ENCODE measurements at regions of chr17 and their contacts with region 1.

Region 1: DNA sequence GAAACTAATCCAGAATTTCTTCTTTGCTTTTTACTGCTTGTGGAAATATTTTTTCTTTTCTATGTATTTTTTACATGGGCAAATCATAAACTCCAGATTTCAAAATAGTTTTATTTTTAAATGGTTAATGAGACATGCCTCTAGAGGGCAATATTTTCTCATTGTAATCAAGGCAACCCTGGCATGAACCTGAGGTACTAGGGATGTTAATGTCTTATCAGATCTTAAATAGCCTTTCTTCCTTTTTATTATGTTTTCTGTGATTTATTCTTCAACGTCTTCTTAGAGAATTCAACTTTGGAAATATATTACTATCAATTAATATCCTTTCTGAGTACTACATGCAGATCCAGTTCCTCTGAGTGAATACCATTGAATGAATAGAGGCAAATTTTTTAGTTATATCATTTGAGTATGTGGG is 324.7 kb downstream of the BCAS3 start:
- DNase-seq: peak in 5 of 9 donors; percentile 24 to 42 (median 31)
- ATAC-seq: no peak
- H3K4me3 ChIP-seq: no peak overlapping the region
- H3K4me3 Mint-ChIP-seq: no peak overlapping the region
- H3K27ac ChIP-seq: no peak overlapping the region
- H3K27ac Mint-ChIP-seq: no peak overlapping the region
- H3K4me1 ChIP-seq: no peaks in the 10 kb centered on the region
- H3K4me1 Mint-ChIP-seq: peaks cover 0 to 3% (median 0%) of the 10 kb centered on the region in 7 donors
- H3K27me3 ChIP-seq: no peaks in the 10 kb centered on the region
- H3K27me3 Mint-ChIP-seq: peaks cover 0 to 20% (median 0%) of the 10 kb centered on the region in 5 donors

Region 2: DNA sequence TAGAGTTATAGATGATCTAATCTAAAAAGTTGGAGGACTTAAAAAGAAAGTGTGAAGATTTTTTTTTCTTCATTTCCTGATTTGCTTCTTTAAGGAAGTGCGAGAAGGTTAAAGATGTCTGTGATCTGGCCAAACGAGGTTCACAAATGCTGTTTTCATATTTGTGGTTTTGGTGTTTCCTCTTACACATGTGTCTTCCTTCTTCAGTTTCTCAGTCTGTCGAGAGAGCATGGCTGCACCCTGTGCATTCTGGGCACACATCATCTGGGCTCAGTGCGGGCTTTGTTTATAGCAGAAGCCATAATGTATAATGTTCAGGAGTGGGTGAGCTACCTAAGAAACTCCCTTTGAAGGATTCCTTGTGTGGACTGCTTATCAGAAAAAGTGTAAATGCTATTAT is 136.9 kb after region 1 on chr17:
- CTCF ChIA-PET with region 1: no interaction called
- POLR2A ChIA-PET with region 1: no interaction called
- intact Hi-C with region 1: loop called in 1 of 2 experiments (anchors 10 kb)
- DNase-seq: peak; percentile 27 to 89 (median 80)
- ATAC-seq: peak; percentile 98
- H3K4me3 ChIP-seq: no peak overlapping the region
- H3K4me3 Mint-ChIP-seq: peak overlapping the region; percentile 24 to 81 (median 66)
- H3K27ac ChIP-seq: peak overlapping the region; percentile 7
- H3K27ac Mint-ChIP-seq: peak overlapping the region; percentile 28 to 86 (median 61)
- H3K4me1 ChIP-seq: peaks cover 14 to 29% of the 10 kb centered on the region in 2 donors
- H3K4me1 Mint-ChIP-seq: peaks cover 12 to 55% (median 44%) of the 10 kb centered on the region in 7 donors
- H3K27me3 ChIP-seq: no peaks in the 10 kb centered on the region
- H3K27me3 Mint-ChIP-seq: no peaks in the 10 kb centered on the region

Region 3: GRCh38 chr17:61361084-61361483 is 358.8 kb after region 1 on chr17:
- CTCF ChIA-PET with region 1: interaction called, 10 read pairs
- POLR2A ChIA-PET with region 1: no interaction called
- intact Hi-C with region 1: loop called (anchors 1 kb)
- DNase-seq: no peak
- ATAC-seq: no peak
- H3K4me3 ChIP-seq: no peak overlapping the region
- H3K4me3 Mint-ChIP-seq: no peak overlapping the region
- H3K27ac ChIP-seq: no peak overlapping the region
- H3K27ac Mint-ChIP-seq: no peak overlapping the region
- H3K4me1 ChIP-seq: no peaks in the 10 kb centered on the region
- H3K4me1 Mint-ChIP-seq: no peaks in the 10 kb centered on the region
- H3K27me3 ChIP-seq: no peaks in the 10 kb centered on the region
- H3K27me3 Mint-ChIP-seq: no peaks in the 10 kb centered on the region

Region 4: GRCh38 chr17:61389670-61390478 is 387.5 kb after region 1 on chr17:
- CTCF ChIA-PET with region 1: interaction called, 3 read pairs
- POLR2A ChIA-PET with region 1: no interaction called
- intact Hi-C with region 1: loop called (anchors 1 kb)
- DNase-seq: peak in 5 of 9 donors; percentile 34 to 64 (median 53)
- ATAC-seq: peak; percentile 40
- H3K4me3 ChIP-seq: no peak overlapping the region
- H3K4me3 Mint-ChIP-seq: no peak overlapping the region
- H3K27ac ChIP-seq: no peak overlapping the region
- H3K27ac Mint-ChIP-seq: no peak overlapping the region
- H3K4me1 ChIP-seq: no peaks in the 10 kb centered on the region
- H3K4me1 Mint-ChIP-seq: peaks cover 0 to 8% (median 4%) of the 10 kb centered on the region in 7 donors
- H3K27me3 ChIP-seq: no peaks in the 10 kb centered on the region
- H3K27me3 Mint-ChIP-seq: peaks cover 1 to 26% (median 16%) of the 10 kb centered on the region in 5 donors

Region 5: DNA sequence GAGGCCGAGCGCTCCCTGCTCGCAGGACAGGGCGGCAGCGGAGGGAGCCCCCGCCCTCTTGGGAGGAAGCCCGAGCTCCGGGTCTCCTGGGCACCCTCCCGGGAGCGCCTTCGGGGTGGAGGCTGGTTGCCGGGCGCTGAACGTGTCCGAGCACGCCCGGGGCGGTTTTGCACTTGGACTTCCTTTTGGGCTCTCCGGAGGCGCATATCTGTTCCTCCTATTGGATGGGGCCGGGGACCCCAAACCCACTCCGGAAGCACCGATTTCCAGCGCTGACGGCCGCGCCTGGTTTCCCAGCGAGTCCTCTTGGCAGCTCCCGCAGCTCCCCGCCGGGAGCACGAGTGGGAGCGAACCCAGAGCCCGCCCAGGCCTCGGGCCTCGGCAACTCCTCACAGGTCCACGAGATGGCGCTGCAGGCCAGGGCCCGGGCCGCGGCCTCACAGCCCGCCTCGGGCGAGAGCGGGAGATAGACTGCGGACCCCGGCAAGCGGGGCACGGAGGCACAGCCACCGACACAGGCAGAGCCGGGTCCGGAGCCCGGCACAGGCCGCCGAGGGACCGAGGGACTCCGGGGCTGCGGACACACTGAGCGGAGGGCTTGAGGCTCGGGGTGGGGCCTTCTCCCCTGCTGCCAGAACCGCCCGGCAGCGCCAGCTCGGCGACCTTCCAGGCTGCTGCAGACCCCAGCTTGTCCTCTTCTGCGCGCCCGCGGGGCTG is 410.0 kb after region 1 on chr17:
- CTCF ChIA-PET with region 1: no interaction called
- POLR2A ChIA-PET with region 1: no interaction called
- intact Hi-C with region 1: loop called in 1 of 2 experiments (anchors 1 kb)
- DNase-seq: peak; percentile 59 to 91 (median 81)
- ATAC-seq: peak; percentile 88
- H3K4me3 ChIP-seq: peak overlapping the region; percentile 64
- H3K4me3 Mint-ChIP-seq: peak overlapping the region in 9 of 10 donors; percentile 56 to 85 (median 76)
- H3K27ac ChIP-seq: peak overlapping the region; percentile 37
- H3K27ac Mint-ChIP-seq: no peak overlapping the region
- H3K4me1 ChIP-seq: peaks cover 7 to 15% of the 10 kb centered on the region in 2 donors
- H3K4me1 Mint-ChIP-seq: peaks cover 12 to 31% (median 23%) of the 10 kb centered on the region in 7 donors
- H3K27me3 ChIP-seq: peaks cover 0 to 23% of the 10 kb centered on the region in 2 donors
- H3K27me3 Mint-ChIP-seq: peaks cover 22 to 59% (median 28%) of the 10 kb centered on the region in 5 donors

Region 6: DNA sequence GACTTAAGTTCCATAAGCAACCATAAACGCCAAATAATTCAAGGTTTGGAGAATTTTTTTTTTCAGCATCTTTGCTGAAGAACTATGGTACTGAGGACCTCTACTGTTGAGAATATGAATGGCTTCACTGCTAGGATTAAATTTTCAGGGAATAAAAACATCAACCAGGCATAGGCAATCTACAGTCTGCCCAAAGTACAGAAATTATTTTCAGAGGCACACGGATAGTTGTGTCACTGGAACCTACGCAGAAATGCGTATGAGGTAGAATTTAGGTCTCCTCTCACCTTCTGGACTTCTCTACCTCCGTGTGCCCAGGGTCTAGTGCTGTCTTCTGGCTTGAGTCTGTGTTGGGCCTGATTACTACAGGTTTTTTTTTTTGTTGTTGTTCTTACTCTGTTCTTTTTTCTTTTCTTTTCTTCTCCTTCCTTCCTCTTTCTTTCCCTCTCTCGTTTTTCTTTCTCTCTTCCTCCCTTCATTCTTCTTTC is 549.0 kb after region 1 on chr17:
- CTCF ChIA-PET with region 1: no interaction called
- POLR2A ChIA-PET with region 1: no interaction called
- intact Hi-C with region 1: loop called in 1 of 2 experiments (anchors 2 kb)
- DNase-seq: peak in 1 of 9 donors; percentile 16
- ATAC-seq: no peak
- H3K4me3 ChIP-seq: no peak overlapping the region
- H3K4me3 Mint-ChIP-seq: no peak overlapping the region
- H3K27ac ChIP-seq: no peak overlapping the region
- H3K27ac Mint-ChIP-seq: no peak overlapping the region
- H3K4me1 ChIP-seq: no peaks in the 10 kb centered on the region
- H3K4me1 Mint-ChIP-seq: no peaks in the 10 kb centered on the region
- H3K27me3 ChIP-seq: no peaks in the 10 kb centered on the region
- H3K27me3 Mint-ChIP-seq: peaks cover 37 to 58% (median 53%) of the 10 kb centered on the region in 5 donors

Region 7: GRCh38 chr17:61837175-61838051 is 835.1 kb after region 1 on chr17:
- CTCF ChIA-PET with region 1: no interaction called
- POLR2A ChIA-PET with region 1: no interaction called
- intact Hi-C with region 1: loop called in 1 of 2 experiments (anchors 2 kb)
- DNase-seq: peak in 6 of 9 donors; percentile 16 to 31 (median 27)
- ATAC-seq: peak; percentile 70
- H3K4me3 ChIP-seq: no peak overlapping the region
- H3K4me3 Mint-ChIP-seq: no peak overlapping the region
- H3K27ac ChIP-seq: no peak overlapping the region
- H3K27ac Mint-ChIP-seq: no peak overlapping the region
- H3K4me1 ChIP-seq: no peaks in the 10 kb centered on the region
- H3K4me1 Mint-ChIP-seq: no peaks in the 10 kb centered on the region
- H3K27me3 ChIP-seq: no peaks in the 10 kb centered on the region
- H3K27me3 Mint-ChIP-seq: no peaks in the 10 kb centered on the region

Measured in naive thymus-derived CD4-positive, alpha-beta T cell (primary cell).